ENCODE measurements at regions of chr15 and their contacts with region 1.

Region 1: DNA sequence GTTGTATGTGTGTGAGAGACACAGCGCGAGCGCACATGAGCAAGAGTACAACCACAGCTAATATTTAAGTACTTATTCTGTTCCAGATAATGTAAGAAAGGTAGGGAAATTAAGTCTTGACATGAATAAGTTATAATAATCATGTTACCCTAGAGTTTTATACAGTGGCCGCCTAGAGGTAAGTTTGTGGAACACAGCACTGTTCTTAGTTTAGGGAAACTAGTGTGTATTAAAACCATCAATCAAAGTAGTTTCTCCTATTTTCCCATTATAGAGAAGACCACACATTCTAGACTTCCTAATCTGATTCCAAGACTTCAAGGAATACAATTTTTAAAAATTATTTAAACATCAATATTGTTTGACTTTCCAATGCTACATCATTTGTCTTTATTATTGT is 9.5 kb downstream of the ALDH1A2 start:
- DNase-seq: no peak
- H3K4me3 ChIP-seq: no peak overlapping the region
- H3K4me3 Mint-ChIP-seq: no peak overlapping the region
- H3K27ac ChIP-seq: no peak overlapping the region
- H3K27ac Mint-ChIP-seq: no peak overlapping the region
- H3K4me1 ChIP-seq: no peaks in the 10 kb centered on the region
- H3K4me1 Mint-ChIP-seq: peaks cover 7% of the 10 kb centered on the region
- H3K27me3 ChIP-seq: peaks cover 41 to 51% of the 10 kb centered on the region in 2 donors
- H3K27me3 Mint-ChIP-seq: peaks cover 20 to 30% (median 25%) of the 10 kb centered on the region in 3 donors
- CTCF ChIP-seq: peak; percentile 24

Region 2: DNA sequence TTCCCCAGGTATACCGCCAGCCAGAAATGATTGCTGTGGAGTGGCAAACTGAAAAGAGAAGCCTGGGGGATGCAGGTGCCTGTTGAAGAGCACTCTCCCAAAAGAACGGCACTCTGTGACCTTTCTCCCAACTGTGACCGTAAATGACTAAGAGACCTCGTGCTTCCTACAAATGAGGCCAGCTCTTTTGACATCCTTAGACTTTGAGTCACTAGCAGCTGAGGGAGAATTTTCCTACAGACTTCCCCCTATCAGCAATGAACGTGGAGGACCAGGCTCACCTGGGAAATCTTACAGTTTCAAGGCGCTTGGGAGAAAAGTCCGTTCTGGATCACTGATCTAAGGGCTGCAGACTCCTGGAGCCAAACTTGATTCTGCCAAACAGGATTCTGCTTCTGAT is 90.7 kb after region 1 on chr15:
- intact Hi-C with region 1: no loop called
- DNase-seq: peak; percentile 93 to 98 (median 98)
- H3K4me3 ChIP-seq: peak overlapping the region in 1 of 3 experiments; percentile 55
- H3K4me3 Mint-ChIP-seq: peak overlapping the region; percentile 58 to 78
- H3K27ac ChIP-seq: peak overlapping the region; percentile 98
- H3K27ac Mint-ChIP-seq: peak overlapping the region; percentile 99 to 100 (median 100)
- H3K4me1 ChIP-seq: peaks cover 66 to 79% of the 10 kb centered on the region in 2 donors
- H3K4me1 Mint-ChIP-seq: peaks cover 64% of the 10 kb centered on the region
- H3K27me3 ChIP-seq: no peaks in the 10 kb centered on the region
- H3K27me3 Mint-ChIP-seq: peaks cover 0 to 2% (median 0%) of the 10 kb centered on the region in 3 donors
- CTCF ChIP-seq: no peak

Region 3: GRCh38 chr15:58190419-58190818 is 134.4 kb after region 1 on chr15:
- intact Hi-C with region 1: loop called in 1 of 2 experiments (anchors 10 kb)
- DNase-seq: peak in 1 of 3 donors; percentile 3
- H3K4me3 ChIP-seq: no peak overlapping the region
- H3K4me3 Mint-ChIP-seq: no peak overlapping the region
- H3K27ac ChIP-seq: no peak overlapping the region
- H3K27ac Mint-ChIP-seq: no peak overlapping the region
- H3K4me1 ChIP-seq: no peaks in the 10 kb centered on the region
- H3K4me1 Mint-ChIP-seq: no peaks in the 10 kb centered on the region
- H3K27me3 ChIP-seq: no peaks in the 10 kb centered on the region
- H3K27me3 Mint-ChIP-seq: peaks cover 9 to 16% (median 12%) of the 10 kb centered on the region in 3 donors
- CTCF ChIP-seq: no peak

Region 4: GRCh38 chr15:58314593-58315216 is 258.7 kb after region 1 on chr15:
- intact Hi-C with region 1: no loop called
- DNase-seq: no peak
- H3K4me3 ChIP-seq: no peak overlapping the region
- H3K4me3 Mint-ChIP-seq: no peak overlapping the region
- H3K27ac ChIP-seq: no peak overlapping the region
- H3K27ac Mint-ChIP-seq: peak overlapping the region in 2 of 7 donors; percentile 28 to 79
- H3K4me1 ChIP-seq: no peaks in the 10 kb centered on the region
- H3K4me1 Mint-ChIP-seq: peaks cover 8% of the 10 kb centered on the region
- H3K27me3 ChIP-seq: no peaks in the 10 kb centered on the region
- H3K27me3 Mint-ChIP-seq: peaks cover 0 to 4% (median 1%) of the 10 kb centered on the region in 3 donors
- CTCF ChIP-seq: no peak